Heart right ventricle (tissue), 16 donors: ENCODE measurements at regions of chr19 and their contacts with region 1.

Region 1: DNA sequence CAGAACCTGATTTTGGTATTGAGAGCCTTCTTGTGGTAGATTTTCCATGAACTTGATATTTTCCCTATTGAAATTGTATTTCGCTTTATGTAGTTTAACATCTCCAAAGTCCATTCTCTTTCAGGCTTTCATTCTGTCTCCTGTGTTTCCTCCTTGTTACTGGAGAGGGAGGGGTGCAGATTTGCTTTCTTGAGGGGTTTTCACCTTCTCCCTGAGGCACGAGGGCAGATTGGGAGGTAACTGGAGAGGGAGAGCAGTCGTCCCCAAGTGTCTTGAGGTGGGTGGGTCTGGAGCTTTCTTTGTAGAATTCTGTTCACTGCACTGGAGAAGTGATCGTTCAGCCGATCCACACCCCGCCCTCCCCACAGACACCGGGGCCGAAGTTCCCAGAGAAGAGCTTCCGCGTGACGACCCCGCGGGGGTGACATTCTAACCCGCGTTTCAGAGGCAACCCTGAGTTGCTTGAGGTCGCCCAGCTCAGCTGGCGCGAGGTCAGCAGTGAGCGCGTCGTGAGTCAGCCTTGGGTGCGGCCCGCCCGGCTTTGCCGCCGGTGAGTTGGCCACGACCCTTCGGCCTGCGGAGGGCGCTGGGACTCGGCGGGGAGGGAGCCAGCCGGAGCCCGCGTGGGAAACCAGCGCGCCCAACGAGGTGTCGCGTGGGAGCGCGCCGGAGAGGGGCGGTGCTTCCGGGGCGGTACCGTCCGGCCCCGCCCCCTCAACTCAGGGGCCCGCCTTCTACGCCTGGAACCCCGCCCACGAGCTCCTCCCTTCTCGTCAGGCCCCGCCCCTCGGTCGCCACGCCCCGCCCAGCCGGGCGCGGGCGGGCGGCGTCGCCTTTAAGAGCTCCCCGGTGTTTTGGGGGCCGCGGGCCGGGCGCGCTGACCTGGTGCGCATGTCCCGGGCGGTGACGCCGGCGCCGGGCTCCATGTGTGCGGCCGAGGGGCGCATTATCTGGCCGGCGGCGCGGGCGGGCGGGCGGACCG is at the start of gene GATAD2A:
- DNase-seq: peak; percentile 93 to 96
- ATAC-seq: peak; percentile 94 to 97 (median 95)
- H3K4me3 ChIP-seq: peak within 1 kb of the TSS; percentile 80 to 98 (median 92)
- H3K27ac ChIP-seq: peak within 1 kb of the TSS; percentile 72 to 95 (median 89)
- H3K4me1 ChIP-seq: peaks cover 13 to 69% (median 46%) of the 10 kb centered on the region in 9 donors
- H3K27me3 ChIP-seq: no peaks in the 10 kb centered on the region
- CTCF ChIP-seq: peak in 8 of 9 donors; percentile 25 to 75 (median 53)
- total RNA-seq, gene GATAD2A: 22.1 to 48.5 (median 26.0) TPM

Region 2: GRCh38 chr19:19366612-19367396 is 38.4 kb before region 1 on chr19:
- intact Hi-C with region 1: loop called in 2 of 10 experiments (anchors 5 kb)
- DNase-seq: peak; percentile 54 to 74
- ATAC-seq: peak; percentile 66 to 84 (median 80)
- H3K4me3 ChIP-seq: peak overlapping the region in 1 of 10 donors; percentile 8
- H3K27ac ChIP-seq: peak overlapping the region in 1 of 10 donors; percentile 2
- H3K4me1 ChIP-seq: peaks cover 5 to 29% (median 19%) of the 10 kb centered on the region in 9 donors
- H3K27me3 ChIP-seq: no peaks in the 10 kb centered on the region
- CTCF ChIP-seq: peak; percentile 81 to 99 (median 95)

Region 3: DNA sequence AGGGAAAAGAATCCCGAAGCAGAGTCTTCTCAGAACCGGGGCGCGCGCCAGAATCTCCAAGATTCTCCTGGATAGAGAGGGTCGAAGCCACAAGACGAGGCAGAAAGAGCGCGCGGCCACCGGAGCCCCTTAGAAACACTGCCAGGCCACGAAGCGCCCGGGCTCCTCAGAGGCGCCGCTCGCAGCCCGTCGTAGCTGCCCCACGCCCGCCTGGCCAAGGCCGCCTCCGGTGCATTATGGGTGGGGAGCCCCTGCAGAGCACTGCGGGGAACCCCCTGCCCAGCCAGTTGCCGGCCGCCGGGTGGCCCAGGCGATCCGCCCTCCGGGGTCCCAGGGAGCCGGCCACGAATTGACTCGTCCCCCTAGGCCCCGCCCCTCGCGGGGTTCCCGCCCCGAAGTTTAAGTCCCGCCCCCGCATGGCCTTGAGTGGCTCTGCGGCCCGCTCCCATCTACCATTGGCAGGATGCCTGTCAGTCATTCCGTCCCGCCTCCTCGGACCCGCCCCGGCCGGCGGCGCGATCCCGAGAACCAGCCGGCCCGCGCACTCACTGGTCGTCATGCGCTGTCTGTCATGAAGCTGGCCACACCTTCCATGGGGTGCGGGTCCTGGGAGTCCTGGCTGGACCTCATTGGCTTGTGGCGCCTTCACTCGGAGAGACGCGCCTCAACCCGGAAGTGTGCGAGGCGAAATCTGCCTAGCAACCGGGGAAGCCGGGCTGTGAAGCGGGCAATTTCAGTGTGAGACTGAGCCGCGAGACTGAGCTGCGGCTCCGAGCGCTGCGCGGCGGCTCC is 19.9 kb before region 1 on chr19:
- intact Hi-C with region 1: loop called in 3 of 10 experiments (anchors 1 to 2 kb)
- DNase-seq: peak; percentile 99 to 100
- ATAC-seq: peak; percentile 98 to 99 (median 99)
- H3K4me3 ChIP-seq: peak overlapping the region; percentile 36 to 98 (median 88)
- H3K27ac ChIP-seq: peak overlapping the region; percentile 25 to 96 (median 90)
- H3K4me1 ChIP-seq: peaks cover 9 to 60% (median 48%) of the 10 kb centered on the region in 9 donors
- H3K27me3 ChIP-seq: no peaks in the 10 kb centered on the region
- CTCF ChIP-seq: peak in 7 of 9 donors; percentile 10 to 53 (median 31)

Region 4: GRCh38 chr19:19459707-19460251 is 54.6 kb after region 1 on chr19:
- intact Hi-C with region 1: loop called in 3 of 10 experiments (anchors 5 to 10 kb)
- DNase-seq: no peak
- ATAC-seq: peak in 7 of 8 donors; percentile 16 to 60 (median 37)
- H3K4me3 ChIP-seq: peak overlapping the region in 4 of 10 donors; percentile 5 to 37 (median 18)
- H3K27ac ChIP-seq: peak overlapping the region; percentile 49 to 90 (median 72)
- H3K4me1 ChIP-seq: peaks cover 36 to 83% (median 71%) of the 10 kb centered on the region in 9 donors
- H3K27me3 ChIP-seq: no peaks in the 10 kb centered on the region
- CTCF ChIP-seq: no peak

Region 5: GRCh38 chr19:19475849-19476828 is 71.0 kb after region 1 on chr19:
- intact Hi-C with region 1: loop called in 3 of 10 experiments (anchors 5 to 10 kb)
- DNase-seq: no peak
- ATAC-seq: peak in 5 of 8 donors; percentile 30 to 53 (median 44)
- H3K4me3 ChIP-seq: no peak overlapping the region
- H3K27ac ChIP-seq: peak overlapping the region in 1 of 10 donors; percentile 38
- H3K4me1 ChIP-seq: peaks cover 0 to 44% (median 25%) of the 10 kb centered on the region in 9 donors
- H3K27me3 ChIP-seq: no peaks in the 10 kb centered on the region
- CTCF ChIP-seq: peak in 7 of 9 donors; percentile 20 to 54 (median 44)

Region 6: DNA sequence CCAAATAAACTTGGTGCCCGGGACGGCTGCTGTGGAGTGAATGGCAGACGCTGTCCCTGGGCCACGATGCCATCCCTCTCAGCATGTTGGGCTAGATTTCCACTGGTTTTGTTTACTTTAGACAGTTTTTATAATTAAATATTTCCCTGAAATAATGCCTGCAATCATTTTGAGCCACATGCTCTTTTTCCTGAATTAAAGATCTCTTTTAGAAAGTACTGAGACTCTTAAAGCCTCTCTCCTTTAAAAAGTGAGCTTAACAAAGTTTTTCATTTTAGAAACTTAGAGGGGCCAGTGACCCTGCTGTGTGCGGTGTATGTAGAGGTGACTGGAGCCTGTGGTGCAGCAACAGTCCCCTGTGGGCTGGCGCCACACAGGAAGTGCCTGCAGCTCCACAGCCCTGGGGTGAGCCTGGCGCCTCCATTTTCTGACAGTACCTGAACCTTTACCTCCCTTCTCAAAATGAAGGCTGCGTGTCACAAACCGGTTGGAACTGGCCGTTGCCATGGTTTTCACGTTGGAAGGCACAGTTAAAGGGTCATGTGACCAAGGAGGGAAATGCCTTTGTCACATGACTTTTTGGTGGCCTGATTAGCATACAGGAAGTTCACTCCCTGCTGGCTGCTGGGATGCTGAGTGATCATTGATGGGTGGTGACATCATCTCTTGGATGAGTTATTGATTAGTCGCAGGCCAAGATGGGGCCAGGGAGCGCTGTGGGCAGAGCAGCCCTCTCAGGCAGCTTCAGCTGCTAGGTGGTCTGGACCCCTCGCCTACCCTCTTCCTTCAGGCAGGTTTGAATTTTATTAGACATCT is 83.9 kb after region 1 on chr19:
- intact Hi-C with region 1: loop called in 2 of 10 experiments (anchors 5 to 10 kb)
- DNase-seq: peak; percentile 61 to 87
- ATAC-seq: peak; percentile 42 to 84 (median 73)
- H3K4me3 ChIP-seq: peak overlapping the region in 7 of 10 donors; percentile 18 to 47 (median 26)
- H3K27ac ChIP-seq: peak overlapping the region; percentile 36 to 91 (median 80)
- H3K4me1 ChIP-seq: peaks cover 22 to 66% (median 49%) of the 10 kb centered on the region in 9 donors
- H3K27me3 ChIP-seq: no peaks in the 10 kb centered on the region
- CTCF ChIP-seq: no peak